Heart right ventricle (tissue), 16 donors: ENCODE measurements at regions of chr1 and their contacts with region 1.

Region 1: GRCh38 chr1:56967900-56968832 is 2.4 kb upstream of the C8B start:
- DNase-seq: peak; percentile 9 to 23
- ATAC-seq: no peak
- H3K4me3 ChIP-seq: no peak overlapping the region
- H3K27ac ChIP-seq: no peak overlapping the region
- H3K4me1 ChIP-seq: no peaks in the 10 kb centered on the region
- H3K27me3 ChIP-seq: peaks cover 0 to 3% (median 0%) of the 10 kb centered on the region in 7 donors
- CTCF ChIP-seq: peak in 7 of 9 donors; percentile 39 to 60 (median 46)

Region 2: GRCh38 chr1:56854521-56855099 is 113.6 kb before region 1 on chr1 and contains the start of gene C8A:
- intact Hi-C with region 1: loop called in 1 of 10 experiments (anchors 10 kb)
- DNase-seq: no peak
- ATAC-seq: no peak
- H3K4me3 ChIP-seq: no peak within 1 kb of the TSS
- H3K27ac ChIP-seq: no peak within 1 kb of the TSS
- H3K4me1 ChIP-seq: no peaks in the 10 kb centered on the region
- H3K27me3 ChIP-seq: peaks cover 0 to 4% (median 0%) of the 10 kb centered on the region in 7 donors
- CTCF ChIP-seq: no peak
- total RNA-seq, gene C8A: 0.09 TPM in 1 of 10 donors, not detected in the others

Region 3: DNA sequence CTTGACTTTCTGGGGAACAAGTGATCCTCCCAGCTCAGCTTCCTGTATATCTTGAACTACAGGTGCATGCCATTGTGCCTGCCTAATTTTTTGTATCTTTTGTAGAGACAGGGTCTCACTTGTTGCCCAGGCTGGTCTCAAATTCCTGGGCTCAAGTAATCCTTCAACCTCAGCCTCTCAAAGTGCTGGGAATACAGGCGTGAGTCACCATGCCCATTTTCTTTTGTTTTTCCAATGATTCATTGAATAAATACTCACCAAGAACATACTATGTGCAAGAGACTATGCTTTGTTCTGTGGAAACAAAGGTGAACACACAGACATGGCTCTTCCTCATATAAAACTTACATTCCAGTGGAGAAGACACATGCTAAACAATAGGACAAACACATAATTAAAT is 863.5 kb after region 1 on chr1:
- intact Hi-C with region 1: no loop called
- DNase-seq: no peak
- ATAC-seq: no peak
- H3K4me3 ChIP-seq: no peak overlapping the region
- H3K27ac ChIP-seq: no peak overlapping the region
- H3K4me1 ChIP-seq: no peaks in the 10 kb centered on the region
- H3K27me3 ChIP-seq: peaks cover 0 to 4% (median 0%) of the 10 kb centered on the region in 7 donors
- CTCF ChIP-seq: no peak